ENCODE measurements at regions of chr12 and their contacts with region 1.

Region 1: DNA sequence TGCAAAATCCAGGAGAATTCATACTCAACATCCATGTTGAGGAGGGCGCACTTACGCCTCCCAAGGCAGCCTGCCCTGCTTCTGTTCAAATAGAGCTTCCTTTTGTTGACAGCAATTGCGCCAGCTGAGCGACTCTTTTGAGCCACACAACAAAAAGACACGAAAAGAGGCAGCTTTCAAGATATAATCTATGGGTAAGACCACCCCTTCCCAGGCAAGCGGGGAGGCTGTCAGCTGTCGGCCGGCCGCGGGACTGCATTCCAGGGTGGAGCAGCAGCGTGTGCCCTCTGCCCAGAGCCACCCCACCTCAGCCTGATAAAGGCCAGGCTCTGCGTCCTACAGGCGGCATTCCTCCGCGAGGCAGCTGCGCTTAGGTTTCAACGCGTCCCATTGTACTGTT is 15.8 kb upstream of the STAB2 start:
- DNase-seq: no peak
- ATAC-seq: peak; percentile 84
- H3K4me3 ChIP-seq: peak overlapping the region; percentile 25 to 41
- H3K27ac ChIP-seq: no peak overlapping the region
- H3K4me1 ChIP-seq: 0 out of 2 replicates have a peak, but pooled peaks cover 3% of the 10 kb centered on the region
- H3K27me3 ChIP-seq: peaks cover 9% of the 10 kb centered on the region
- CTCF ChIP-seq: peak; percentile 26

Region 2: DNA sequence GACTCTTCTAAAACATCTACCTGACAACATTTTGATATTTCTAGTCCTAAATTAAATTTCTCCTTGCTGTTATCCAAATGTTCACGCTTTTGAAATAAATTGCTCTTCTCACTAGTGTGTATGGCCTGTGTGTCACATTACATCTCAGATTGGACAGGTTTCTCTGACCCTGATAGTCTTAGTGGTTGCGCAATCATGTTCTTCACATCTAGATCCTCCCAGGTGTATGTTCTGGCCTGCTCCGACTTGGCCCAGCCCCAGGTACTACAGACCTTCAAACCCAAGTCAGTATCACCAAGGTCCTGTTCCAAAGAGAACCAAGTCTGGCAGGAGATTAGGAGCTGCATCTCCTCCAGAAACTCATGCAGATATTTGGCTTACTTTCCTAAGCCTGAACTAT is 404.3 kb before region 1 on chr12:
- CTCF ChIA-PET with region 1: interaction called, 11 read pairs
- POLR2A ChIA-PET with region 1: no interaction called
- in situ Hi-C with region 1: no loop called
- intact Hi-C with region 1: no loop called
- DNase-seq: no peak
- ATAC-seq: no peak
- H3K4me3 ChIP-seq: no peak overlapping the region
- H3K27ac ChIP-seq: no peak overlapping the region
- H3K4me1 ChIP-seq: no peaks in the 10 kb centered on the region
- H3K27me3 ChIP-seq: no peaks in the 10 kb centered on the region
- CTCF ChIP-seq: no peak

Region 3: DNA sequence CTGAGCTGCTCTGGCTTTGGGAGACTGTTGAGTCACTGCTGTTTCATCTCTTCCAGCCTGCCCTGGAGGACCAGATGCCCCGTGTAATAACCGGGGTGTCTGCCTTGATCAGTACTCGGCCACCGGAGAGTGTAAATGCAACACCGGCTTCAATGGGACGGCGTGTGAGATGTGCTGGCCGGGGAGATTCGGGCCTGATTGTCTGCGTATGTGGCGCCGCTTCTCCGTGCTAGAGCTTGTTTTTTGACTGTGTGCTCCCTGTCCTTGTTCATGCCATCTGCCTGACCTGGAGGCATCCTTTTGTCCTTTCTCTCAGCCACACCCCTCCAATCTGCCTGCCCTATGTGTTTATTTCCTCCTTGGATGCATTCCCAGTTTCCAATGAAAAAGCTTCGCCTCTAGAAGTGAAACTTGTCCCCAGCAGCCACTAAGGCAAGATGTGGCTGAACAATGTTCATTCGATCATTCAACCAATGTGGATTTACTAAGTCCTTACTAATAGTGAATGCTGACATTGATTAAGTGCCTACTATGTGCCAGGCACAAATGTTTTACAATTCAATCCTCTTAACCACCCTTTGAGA is 171.2 kb after region 1 on chr12:
- CTCF ChIA-PET with region 1: no interaction called
- POLR2A ChIA-PET with region 1: no interaction called
- in situ Hi-C with region 1: no loop called
- intact Hi-C with region 1: loop called (anchors 10 kb)
- DNase-seq: no peak
- ATAC-seq: no peak
- H3K4me3 ChIP-seq: no peak overlapping the region
- H3K27ac ChIP-seq: no peak overlapping the region
- H3K4me1 ChIP-seq: no peaks in the 10 kb centered on the region
- H3K27me3 ChIP-seq: no peaks in the 10 kb centered on the region
- CTCF ChIP-seq: no peak

Region 4: GRCh38 chr12:103858953-103859601 is 287.8 kb after region 1 on chr12:
- CTCF ChIA-PET with region 1: no interaction called
- POLR2A ChIA-PET with region 1: no interaction called
- in situ Hi-C with region 1: no loop called
- intact Hi-C with region 1: no loop called
- DNase-seq: peak; percentile 64
- ATAC-seq: peak; percentile 90
- H3K4me3 ChIP-seq: no peak overlapping the region
- H3K27ac ChIP-seq: peak overlapping the region; percentile 86
- H3K4me1 ChIP-seq: peaks cover 18% of the 10 kb centered on the region
- H3K27me3 ChIP-seq: no peaks in the 10 kb centered on the region
- CTCF ChIP-seq: no peak

Region 5: GRCh38 chr12:103908866-103909265 is 337.6 kb after region 1 on chr12:
- CTCF ChIA-PET with region 1: no interaction called
- POLR2A ChIA-PET with region 1: no interaction called
- in situ Hi-C with region 1: no loop called
- intact Hi-C with region 1: no loop called
- DNase-seq: no peak
- ATAC-seq: no peak
- H3K4me3 ChIP-seq: no peak overlapping the region
- H3K27ac ChIP-seq: no peak overlapping the region
- H3K4me1 ChIP-seq: no peaks in the 10 kb centered on the region; the same call in 1 of the 2 replicates
- H3K27me3 ChIP-seq: no peaks in the 10 kb centered on the region
- CTCF ChIP-seq: no peak